ENCODE measurements at regions of chr5 and their contacts with region 1.

Region 1: DNA sequence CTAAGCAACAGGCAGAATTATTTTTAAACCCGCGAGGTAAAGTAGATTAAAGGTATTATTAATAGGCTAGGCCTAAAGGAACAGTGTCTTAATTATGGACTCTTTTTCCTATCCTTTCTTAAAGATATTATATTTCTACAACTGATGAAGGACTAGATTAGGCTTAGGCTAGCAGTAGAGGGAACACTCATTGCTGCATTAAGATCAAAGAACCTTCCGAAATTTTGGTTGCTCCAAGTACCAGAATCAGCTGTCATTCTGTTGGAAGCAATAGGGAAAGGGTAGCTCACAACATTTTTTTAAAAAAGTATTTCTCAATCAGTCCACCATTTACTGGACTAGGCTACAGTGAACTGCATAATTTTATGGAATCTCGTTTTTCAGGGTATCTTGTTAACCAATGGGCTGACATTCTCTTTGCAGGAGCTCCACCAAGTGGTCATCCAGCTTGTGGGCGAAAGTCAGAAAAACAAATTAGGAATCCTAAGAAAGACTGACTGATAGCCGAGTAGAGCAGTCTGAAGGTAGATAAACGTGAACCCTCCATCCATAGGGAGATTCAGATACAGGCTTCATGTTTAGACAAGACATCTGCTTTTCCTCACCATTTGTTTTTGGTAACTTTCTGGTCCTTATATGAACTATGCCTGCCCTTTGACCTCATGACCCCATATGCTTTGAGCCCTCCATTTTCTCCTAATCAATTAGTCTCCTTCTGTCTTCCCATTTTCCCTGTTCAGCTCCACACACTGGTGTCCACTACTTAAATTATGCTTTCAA is 103.6 kb upstream of the CHD1 start:
- DNase-seq: peak; percentile 39 to 65 (median 63)
- H3K4me3 ChIP-seq: peak overlapping the region; percentile 45 to 98 (median 82)
- H3K4me3 Mint-ChIP-seq: peak overlapping the region; percentile 76 to 94
- H3K27ac ChIP-seq: peak overlapping the region in 1 of 2 donors; percentile 78
- H3K27ac Mint-ChIP-seq: peak overlapping the region in 6 of 7 donors; percentile 14 to 91 (median 80)
- H3K4me1 ChIP-seq: peaks cover 50 to 67% of the 10 kb centered on the region in 2 donors
- H3K4me1 Mint-ChIP-seq: peaks cover 65% of the 10 kb centered on the region
- H3K27me3 ChIP-seq: no peaks in the 10 kb centered on the region
- H3K27me3 Mint-ChIP-seq: peaks cover 0 to 4% (median 0%) of the 10 kb centered on the region in 3 donors
- CTCF ChIP-seq: peak; percentile 81

Region 2: DNA sequence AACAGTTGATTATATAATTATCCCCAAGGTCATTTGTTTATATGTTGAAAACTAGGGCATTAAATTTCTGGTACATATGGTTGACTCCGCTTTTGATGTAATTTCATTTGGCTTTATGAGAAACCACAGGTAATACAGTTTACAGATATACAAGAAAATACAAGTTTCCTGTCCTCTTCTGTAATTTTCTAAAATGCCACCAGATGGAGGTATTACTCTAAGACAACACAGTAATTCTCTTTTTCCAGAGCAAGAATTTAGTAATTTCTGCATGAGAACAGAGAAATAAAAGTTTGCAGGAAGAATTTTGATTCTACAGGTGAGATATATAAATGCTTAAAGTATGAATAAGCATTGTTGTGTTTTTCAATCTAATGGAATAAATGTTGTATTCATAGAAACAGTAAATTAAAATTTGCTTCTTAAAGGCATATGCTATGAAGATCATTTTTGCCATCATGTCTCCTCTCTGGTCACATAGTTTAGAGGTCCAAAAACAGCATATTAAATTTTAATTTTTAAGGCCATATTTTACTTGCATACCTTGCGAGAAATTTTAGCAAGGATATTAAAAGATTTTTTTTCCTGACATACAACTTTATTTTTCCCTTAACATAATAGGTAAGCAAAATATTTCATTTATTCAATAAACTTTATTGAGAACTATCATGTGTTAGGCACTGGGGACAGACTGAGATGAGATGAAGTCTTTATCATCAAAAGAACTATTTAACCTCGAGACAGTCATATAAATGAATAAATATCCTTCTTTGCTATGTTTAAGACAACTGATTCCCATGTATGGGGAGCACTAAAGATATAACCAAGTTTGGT is 126.3 kb before region 1 on chr5:
- intact Hi-C with region 1: loop called (anchors 5 kb)
- DNase-seq: peak; percentile 25 to 58 (median 35)
- H3K4me3 ChIP-seq: no peak overlapping the region
- H3K4me3 Mint-ChIP-seq: no peak overlapping the region
- H3K27ac ChIP-seq: no peak overlapping the region
- H3K27ac Mint-ChIP-seq: peak overlapping the region in 1 of 7 donors; percentile 11
- H3K4me1 ChIP-seq: peaks cover 9 to 17% of the 10 kb centered on the region in 2 donors
- H3K4me1 Mint-ChIP-seq: peaks cover 21% of the 10 kb centered on the region
- H3K27me3 ChIP-seq: no peaks in the 10 kb centered on the region
- H3K27me3 Mint-ChIP-seq: no peaks in the 10 kb centered on the region
- CTCF ChIP-seq: peak; percentile 91

Region 3: DNA sequence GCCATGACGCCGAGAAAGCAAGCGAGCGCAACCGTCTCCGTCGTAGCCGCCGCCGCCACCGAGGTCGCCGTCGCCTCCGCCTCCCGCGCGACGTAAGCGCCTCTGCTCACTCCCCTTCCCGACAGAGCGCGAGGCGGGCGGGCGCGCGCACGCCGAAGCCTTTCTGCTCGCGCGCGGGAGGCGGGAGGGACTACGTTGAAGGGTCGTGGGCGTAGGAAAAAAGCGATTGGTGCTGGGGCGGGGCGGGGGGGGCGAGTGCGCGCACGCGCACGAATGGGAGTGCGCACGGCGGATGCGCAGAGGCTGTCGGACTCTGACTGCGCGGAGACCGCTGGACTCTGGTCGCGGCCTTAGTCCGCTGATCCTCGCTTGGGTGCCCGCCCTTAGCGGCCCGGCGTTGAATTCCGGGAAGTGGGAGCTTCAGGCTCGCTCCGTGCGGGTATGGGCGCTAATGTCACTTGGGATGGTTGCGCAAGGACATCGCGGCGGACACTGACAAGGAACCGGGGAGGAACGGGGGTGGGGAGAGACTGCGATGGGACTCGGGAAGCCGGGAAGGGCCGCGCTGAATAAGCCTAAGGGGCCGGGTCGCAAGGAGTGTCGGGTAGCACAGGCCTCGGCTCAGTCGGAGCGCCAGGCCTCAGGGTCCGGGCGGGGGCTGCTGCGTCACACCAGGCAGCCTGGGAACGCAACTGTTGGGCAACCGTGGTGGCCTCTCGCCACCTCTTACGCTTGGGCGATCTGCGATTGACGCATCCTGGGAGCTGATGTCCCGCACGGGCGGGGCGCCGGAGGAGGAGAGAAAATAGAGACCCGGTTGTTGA is 103.3 kb before region 1 on chr5 and contains the start of gene CHD1:
- intact Hi-C with region 1: loop called in 1 of 2 experiments (anchors 5 kb)
- DNase-seq: peak; percentile 99 to 100 (median 99)
- H3K4me3 ChIP-seq: peak within 1 kb of the TSS; percentile 94 to 99 (median 95)
- H3K4me3 Mint-ChIP-seq: peak within 1 kb of the TSS; percentile 98 to 99
- H3K27ac ChIP-seq: peak within 1 kb of the TSS; percentile 100
- H3K27ac Mint-ChIP-seq: peak within 1 kb of the TSS; percentile 100
- H3K4me1 ChIP-seq: peaks cover 49 to 64% of the 10 kb centered on the region in 2 donors
- H3K4me1 Mint-ChIP-seq: peaks cover 58% of the 10 kb centered on the region
- H3K27me3 ChIP-seq: no peaks in the 10 kb centered on the region
- H3K27me3 Mint-ChIP-seq: no peaks in the 10 kb centered on the region
- CTCF ChIP-seq: no peak
- polyA plus RNA-seq, gene CHD1: 3.1 to 45.7 (median 6.7) TPM

Region 4: DNA sequence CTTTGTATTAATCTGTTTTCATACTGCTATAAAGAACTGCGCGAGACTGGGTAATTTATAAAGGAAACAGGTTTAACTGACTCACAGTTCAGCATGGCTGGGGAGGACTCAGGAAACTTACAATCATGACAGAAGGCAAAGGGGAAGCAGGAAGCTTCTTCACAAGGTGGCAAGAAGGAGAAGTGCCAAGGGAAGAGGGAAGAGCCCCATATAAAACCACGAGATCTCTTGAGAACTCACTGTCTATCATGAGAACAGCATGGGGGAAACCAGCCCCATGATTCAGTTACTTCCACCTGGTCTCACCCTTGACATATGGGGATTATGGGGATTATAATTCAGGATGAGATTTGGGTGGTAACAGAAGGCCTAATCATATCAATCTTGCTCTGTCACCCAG is 42.7 kb before region 1 on chr5:
- intact Hi-C with region 1: loop called in 1 of 2 experiments (anchors 5 kb)
- DNase-seq: peak; percentile 79 to 90 (median 86)
- H3K4me3 ChIP-seq: no peak overlapping the region
- H3K4me3 Mint-ChIP-seq: no peak overlapping the region
- H3K27ac ChIP-seq: peak overlapping the region; percentile 69 to 82
- H3K27ac Mint-ChIP-seq: peak overlapping the region; percentile 82 to 91 (median 89)
- H3K4me1 ChIP-seq: peaks cover 22 to 35% of the 10 kb centered on the region in 2 donors
- H3K4me1 Mint-ChIP-seq: peaks cover 36% of the 10 kb centered on the region
- H3K27me3 ChIP-seq: no peaks in the 10 kb centered on the region
- H3K27me3 Mint-ChIP-seq: peaks cover 0 to 2% (median 0%) of the 10 kb centered on the region in 3 donors
- CTCF ChIP-seq: no peak

Measured in CD14-positive monocyte (primary cell).